Activated CD4-positive, alpha-beta memory T cell treated with anti-CD3 and anti-CD28 coated beads for 36 hours (primary cell): ENCODE measurements at regions of chr1 and their contacts with region 1.

Region 1: GRCh38 chr1:212234431-212235395 is 50.5 kb upstream of the PPP2R5A start:
- DNase-seq: peak; percentile 63
- H3K4me3 Mint-ChIP-seq: no peak overlapping the region
- H3K27ac Mint-ChIP-seq: peak overlapping the region; percentile 35
- H3K4me1 Mint-ChIP-seq: peaks cover 33% of the 10 kb centered on the region
- H3K27me3 Mint-ChIP-seq: no peaks in the 10 kb centered on the region

Region 2: DNA sequence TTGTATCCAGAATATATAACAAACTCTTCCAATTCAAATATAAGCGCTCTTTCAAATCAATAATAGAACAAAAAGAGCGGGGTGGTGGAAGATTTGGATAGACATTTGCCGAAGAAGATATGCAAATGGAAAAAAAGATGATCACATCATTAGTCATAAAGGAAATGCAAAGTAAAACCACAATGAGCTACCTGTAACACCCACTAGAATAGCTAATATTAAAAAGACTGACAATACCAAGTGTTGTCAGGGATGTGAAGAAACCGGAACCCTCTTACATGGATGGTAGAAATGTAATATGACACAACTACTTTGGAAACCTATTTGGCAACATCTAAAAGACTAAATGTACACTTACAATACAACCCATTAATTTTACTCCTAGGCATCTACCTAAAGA is 913.7 kb before region 1 on chr1:
- CTCF ChIA-PET with region 1: no interaction called
- POLR2A ChIA-PET with region 1: no interaction called
- intact Hi-C with region 1: no loop called
- DNase-seq: no peak
- H3K4me3 Mint-ChIP-seq: no peak overlapping the region
- H3K27ac Mint-ChIP-seq: peak overlapping the region; percentile 28
- H3K4me1 Mint-ChIP-seq: peaks cover 44% of the 10 kb centered on the region
- H3K27me3 Mint-ChIP-seq: no peaks in the 10 kb centered on the region

Region 3: GRCh38 chr1:212186427-212187207 is 48.1 kb before region 1 on chr1:
- CTCF ChIA-PET with region 1: no interaction called
- POLR2A ChIA-PET with region 1: no interaction called
- intact Hi-C with region 1: no loop called
- DNase-seq: no peak
- H3K4me3 Mint-ChIP-seq: no peak overlapping the region
- H3K27ac Mint-ChIP-seq: peak overlapping the region; percentile 2
- H3K4me1 Mint-ChIP-seq: peaks cover 24% of the 10 kb centered on the region
- H3K27me3 Mint-ChIP-seq: no peaks in the 10 kb centered on the region

Region 4: GRCh38 chr1:212218911-212219310 is 15.8 kb before region 1 on chr1:
- CTCF ChIA-PET with region 1: interaction called, 3 read pairs
- POLR2A ChIA-PET with region 1: interaction called, 3 read pairs
- intact Hi-C with region 1: loop called (anchors 1 kb)
- DNase-seq: peak; percentile 42
- H3K4me3 Mint-ChIP-seq: no peak overlapping the region
- H3K27ac Mint-ChIP-seq: no peak overlapping the region
- H3K4me1 Mint-ChIP-seq: peaks cover 18% of the 10 kb centered on the region
- H3K27me3 Mint-ChIP-seq: peaks cover 2% of the 10 kb centered on the region

Region 5: GRCh38 chr1:212260557-212261355 is 26.0 kb after region 1 on chr1:
- CTCF ChIA-PET with region 1: no interaction called
- POLR2A ChIA-PET with region 1: no interaction called
- intact Hi-C with region 1: loop called (anchors 1 kb)
- DNase-seq: peak; percentile 45
- H3K4me3 Mint-ChIP-seq: no peak overlapping the region
- H3K27ac Mint-ChIP-seq: peak overlapping the region; percentile 4
- H3K4me1 Mint-ChIP-seq: peaks cover 34% of the 10 kb centered on the region
- H3K27me3 Mint-ChIP-seq: no peaks in the 10 kb centered on the region